ENCODE measurements at regions of chrX and their contacts with region 1.

Region 1: DNA sequence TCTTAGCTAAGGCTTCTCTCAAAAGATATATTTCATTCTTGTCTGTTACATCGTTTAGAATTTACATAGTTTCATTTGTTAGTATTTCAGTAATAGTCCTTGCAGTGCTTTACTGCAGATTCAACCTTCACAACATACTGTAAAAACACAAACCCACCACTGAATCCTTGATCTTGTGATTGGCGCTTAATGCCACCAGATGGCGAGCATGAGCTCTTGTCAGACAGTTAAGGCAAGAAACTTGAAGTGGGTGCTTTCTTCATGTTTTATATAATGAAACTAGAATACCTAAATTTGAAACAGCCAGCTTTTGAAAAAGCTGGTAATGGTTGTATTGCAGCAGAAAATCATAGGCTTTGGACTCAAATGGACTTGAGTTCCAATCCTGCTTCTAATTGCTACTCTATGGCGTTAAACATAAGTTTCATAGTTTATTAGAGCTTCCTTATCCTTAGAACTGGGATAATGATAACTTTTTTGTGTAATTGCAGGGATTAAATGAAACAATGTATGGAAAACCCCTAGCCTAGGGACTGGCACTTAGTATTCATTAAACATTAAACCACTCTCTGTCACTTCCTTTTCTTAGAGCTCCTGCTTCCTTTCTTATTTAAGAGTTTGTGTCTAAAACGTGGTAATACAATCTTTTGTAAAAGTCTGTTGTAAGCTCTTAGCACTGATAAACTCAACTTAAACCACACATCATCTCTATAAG is 95.1 kb downstream of the USP9X start:
- DNase-seq: peak; percentile 44
- H3K4me3 ChIP-seq: no peak overlapping the region
- H3K27ac ChIP-seq: no peak overlapping the region
- H3K4me1 ChIP-seq: no peaks in the 10 kb centered on the region; a peak in 1 of 4 replicates
- H3K27me3 ChIP-seq: no peaks in the 10 kb centered on the region
- CTCF ChIP-seq: peak; percentile 85
- EP300 ChIP-seq: no peak
- RAD21 ChIP-seq: peak; percentile 65

Region 2: DNA sequence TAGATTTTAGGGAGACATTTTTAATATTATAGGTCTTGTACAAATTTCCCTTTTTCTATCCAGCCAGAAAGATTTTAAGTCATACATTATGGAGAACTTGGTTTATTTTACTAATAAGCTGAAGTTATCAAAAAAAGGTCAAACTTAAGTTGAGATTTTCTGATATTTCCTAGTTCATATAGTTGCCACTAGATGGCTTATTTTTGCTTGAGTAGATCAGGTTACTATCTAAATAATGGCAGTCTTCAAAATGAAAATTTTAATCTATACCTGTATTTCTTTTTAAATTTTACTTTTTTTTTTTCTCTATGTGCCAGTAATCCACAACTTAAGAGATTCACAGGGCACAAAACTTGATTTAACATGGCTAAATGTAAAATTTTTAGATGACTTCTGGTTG is 42.8 kb before region 1 on chrX:
- CTCF ChIA-PET with region 1: interaction called, 17 read pairs
- POLR2A ChIA-PET with region 1: no interaction called
- DNase-seq: no peak
- H3K4me3 ChIP-seq: no peak overlapping the region
- H3K27ac ChIP-seq: no peak overlapping the region
- H3K4me1 ChIP-seq: no peaks in the 10 kb centered on the region
- H3K27me3 ChIP-seq: no peaks in the 10 kb centered on the region
- CTCF ChIP-seq: peak; percentile 70
- EP300 ChIP-seq: no peak
- RAD21 ChIP-seq: peak; percentile 22; the same call in 1 of the 2 replicates

Region 3: DNA sequence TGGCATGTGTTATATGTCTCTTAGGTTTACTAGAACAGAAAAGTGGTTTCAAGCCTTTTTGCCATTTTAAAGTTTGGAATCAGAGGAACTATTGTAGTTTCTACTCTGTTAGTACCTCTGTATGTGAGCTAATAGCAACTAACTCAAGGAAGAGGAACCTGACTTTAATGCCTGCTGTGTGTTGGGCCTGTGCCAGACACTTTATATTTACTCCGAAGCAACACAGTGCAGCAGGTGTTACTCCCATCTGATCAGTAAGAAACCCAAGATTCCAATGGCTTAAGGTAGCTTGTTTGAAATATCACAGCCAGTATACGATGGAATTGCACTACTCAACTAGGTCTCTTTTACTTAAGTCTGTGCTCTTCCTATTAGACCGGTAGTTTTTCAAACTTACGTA is 15.9 kb before region 1 on chrX:
- CTCF ChIA-PET with region 1: interaction called, 36 read pairs
- POLR2A ChIA-PET with region 1: no interaction called
- DNase-seq: no peak
- H3K4me3 ChIP-seq: no peak overlapping the region
- H3K27ac ChIP-seq: no peak overlapping the region
- H3K4me1 ChIP-seq: no peaks in the 10 kb centered on the region
- H3K27me3 ChIP-seq: no peaks in the 10 kb centered on the region
- CTCF ChIP-seq: no peak
- EP300 ChIP-seq: no peak
- RAD21 ChIP-seq: no peak

Region 4: DNA sequence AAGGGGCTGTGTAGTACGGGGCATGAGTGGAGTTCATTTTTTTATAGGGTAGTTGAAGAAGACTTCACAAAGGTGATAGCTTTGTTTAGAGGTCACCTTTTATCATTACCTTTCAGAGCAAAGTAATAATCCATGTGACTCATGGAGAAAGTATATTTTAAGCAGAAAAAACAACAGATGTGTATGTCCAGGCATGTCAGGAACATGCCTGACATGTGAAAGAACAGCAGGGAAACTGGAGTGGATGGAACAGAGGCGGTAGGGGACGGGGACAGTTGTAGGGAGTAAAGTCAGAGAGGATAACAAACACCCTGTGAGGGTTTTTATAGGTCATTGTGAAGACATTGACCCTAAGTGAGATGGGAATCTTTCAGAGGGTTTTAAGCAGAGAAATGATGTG is 12.5 kb after region 1 on chrX:
- CTCF ChIA-PET with region 1: interaction called, 49 read pairs
- POLR2A ChIA-PET with region 1: no interaction called
- DNase-seq: no peak
- H3K4me3 ChIP-seq: no peak overlapping the region
- H3K27ac ChIP-seq: peak overlapping the region in 1 of 2 experiments; percentile 12; a peak in 1 of 4 replicates
- H3K4me1 ChIP-seq: no peaks in the 10 kb centered on the region
- H3K27me3 ChIP-seq: no peaks in the 10 kb centered on the region
- CTCF ChIP-seq: no peak
- EP300 ChIP-seq: no peak
- RAD21 ChIP-seq: no peak

Region 5: GRCh38 chrX:41224606-41225005 is 44.3 kb after region 1 on chrX:
- CTCF ChIA-PET with region 1: interaction called, 11 read pairs
- POLR2A ChIA-PET with region 1: no interaction called
- DNase-seq: no peak
- H3K4me3 ChIP-seq: no peak overlapping the region
- H3K27ac ChIP-seq: no peak overlapping the region
- H3K4me1 ChIP-seq: no peaks in the 10 kb centered on the region
- H3K27me3 ChIP-seq: no peaks in the 10 kb centered on the region
- CTCF ChIP-seq: no peak
- EP300 ChIP-seq: no peak
- RAD21 ChIP-seq: no peak

Region 6: DNA sequence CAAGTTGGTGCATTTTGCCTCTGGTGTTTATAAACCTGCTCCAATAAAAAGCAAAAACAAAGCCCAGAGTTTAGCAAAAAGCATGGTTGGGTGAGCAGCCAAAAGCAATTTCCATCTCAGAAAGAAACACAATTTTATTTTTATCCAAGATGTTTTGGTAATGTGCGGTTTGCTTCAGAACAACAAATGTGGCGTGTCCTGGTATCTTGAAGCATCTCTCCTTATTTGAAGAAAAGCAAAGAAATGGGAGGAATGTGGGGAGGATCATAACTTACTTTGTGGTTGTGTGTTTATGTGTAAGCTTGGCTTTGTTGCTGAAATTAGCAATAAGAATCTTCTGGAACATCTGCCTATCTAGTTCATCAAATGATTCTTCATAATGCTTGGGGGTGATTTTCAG is 65.3 kb after region 1 on chrX:
- CTCF ChIA-PET with region 1: interaction called, 13 read pairs
- POLR2A ChIA-PET with region 1: no interaction called
- DNase-seq: no peak
- H3K4me3 ChIP-seq: no peak overlapping the region
- H3K27ac ChIP-seq: no peak overlapping the region
- H3K4me1 ChIP-seq: no peaks in the 10 kb centered on the region
- H3K27me3 ChIP-seq: no peaks in the 10 kb centered on the region
- CTCF ChIP-seq: no peak
- EP300 ChIP-seq: no peak
- RAD21 ChIP-seq: no peak

Region 7: GRCh38 chrX:41259516-41259915 is 79.2 kb after region 1 on chrX:
- CTCF ChIA-PET with region 1: interaction called, 62 read pairs
- POLR2A ChIA-PET with region 1: no interaction called
- DNase-seq: peak; percentile 43
- H3K4me3 ChIP-seq: no peak overlapping the region
- H3K27ac ChIP-seq: no peak overlapping the region
- H3K4me1 ChIP-seq: no peaks in the 10 kb centered on the region
- H3K27me3 ChIP-seq: no peaks in the 10 kb centered on the region
- CTCF ChIP-seq: no peak
- EP300 ChIP-seq: no peak
- RAD21 ChIP-seq: peak; percentile 39; the same call in 1 of the 2 replicates

Region 8: GRCh38 chrX:41350150-41350975 is 170.0 kb after region 1 on chrX:
- CTCF ChIA-PET with region 1: no interaction called
- POLR2A ChIA-PET with region 1: no interaction called
- DNase-seq: no peak
- H3K4me3 ChIP-seq: no peak overlapping the region
- H3K27ac ChIP-seq: peak overlapping the region in 1 of 2 experiments; percentile 43; a peak in 2 of 4 replicates
- H3K4me1 ChIP-seq: peaks cover 2 to 9% of the 10 kb centered on the region in 2 experiments; a peak in 1 of 4 replicates
- H3K27me3 ChIP-seq: no peaks in the 10 kb centered on the region
- CTCF ChIP-seq: no peak
- EP300 ChIP-seq: no peak
- RAD21 ChIP-seq: no peak

Region 9: GRCh38 chrX:41412261-41413081 is 232.1 kb after region 1 on chrX:
- CTCF ChIA-PET with region 1: no interaction called
- POLR2A ChIA-PET with region 1: no interaction called
- DNase-seq: no peak
- H3K4me3 ChIP-seq: no peak overlapping the region
- H3K27ac ChIP-seq: no peak overlapping the region
- H3K4me1 ChIP-seq: no peaks in the 10 kb centered on the region
- H3K27me3 ChIP-seq: peaks cover 4% of the 10 kb centered on the region; the same call in 1 of the 2 replicates
- CTCF ChIP-seq: no peak
- EP300 ChIP-seq: no peak
- RAD21 ChIP-seq: no peak